ENCODE measurements at regions of chr15 and their contacts with region 1.

Region 1: GRCh38 chr15:73972984-73973682 is 19.0 kb downstream of the STOML1 start:
- DNase-seq: peak; percentile 60 to 81 (median 77)
- ATAC-seq: peak; percentile 92
- H3K4me3 ChIP-seq: peak overlapping the region; percentile 7
- H3K4me3 Mint-ChIP-seq: peak overlapping the region in 8 of 10 donors; percentile 0 to 65 (median 33)
- H3K27ac ChIP-seq: no peak overlapping the region
- H3K27ac Mint-ChIP-seq: peak overlapping the region in 2 of 9 donors; percentile 26 to 42
- H3K4me1 ChIP-seq: peaks cover 0 to 20% of the 10 kb centered on the region in 2 donors
- H3K4me1 Mint-ChIP-seq: peaks cover 11 to 44% (median 34%) of the 10 kb centered on the region in 7 donors
- H3K27me3 ChIP-seq: no peaks in the 10 kb centered on the region
- H3K27me3 Mint-ChIP-seq: peaks cover 4 to 22% (median 5%) of the 10 kb centered on the region in 5 donors

Region 2: DNA sequence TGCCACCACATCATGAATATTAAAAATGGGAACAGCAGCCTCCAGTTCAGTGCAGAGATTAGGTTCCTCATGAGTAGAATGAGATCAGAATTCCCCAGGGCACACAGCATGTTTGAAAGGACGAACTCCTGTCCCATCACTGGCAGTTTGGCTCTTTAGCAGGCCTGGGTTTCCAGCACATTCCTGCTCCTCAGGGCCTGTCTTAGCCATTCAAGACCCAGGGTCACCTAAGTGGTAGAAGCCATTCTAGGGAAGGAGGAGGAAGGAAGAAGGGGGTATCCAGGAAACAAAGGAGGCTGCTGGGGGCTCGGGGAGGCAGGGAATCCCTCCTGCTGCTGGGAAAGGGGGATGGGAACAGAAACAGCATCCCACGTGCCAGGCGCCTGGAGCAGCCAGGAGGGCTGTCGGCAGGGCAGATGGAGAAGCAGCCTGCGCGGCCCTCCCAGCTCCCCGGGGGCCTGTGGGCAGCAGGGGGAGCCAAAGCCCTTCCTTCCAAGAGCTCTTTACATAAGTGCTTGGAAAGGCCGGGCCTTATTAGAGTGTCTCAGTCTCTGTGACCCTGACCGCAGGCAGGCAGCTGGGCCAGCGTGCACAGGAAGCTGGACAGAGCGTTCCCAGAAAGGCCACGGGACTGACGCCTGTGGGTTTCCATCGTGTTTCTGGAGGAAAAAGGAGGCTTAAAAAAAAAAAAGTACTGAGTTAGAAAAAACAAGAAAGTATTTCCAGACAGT is 22.1 kb before region 1 on chr15:
- CTCF ChIA-PET with region 1: interaction called, 29 read pairs
- POLR2A ChIA-PET with region 1: no interaction called
- intact Hi-C with region 1: no loop called
- DNase-seq: peak; percentile 53 to 76 (median 71)
- ATAC-seq: peak; percentile 89
- H3K4me3 ChIP-seq: no peak overlapping the region
- H3K4me3 Mint-ChIP-seq: peak overlapping the region in 1 of 10 donors; percentile 23
- H3K27ac ChIP-seq: no peak overlapping the region
- H3K27ac Mint-ChIP-seq: peak overlapping the region; percentile 10 to 97 (median 83)
- H3K4me1 ChIP-seq: peaks cover 0 to 6% of the 10 kb centered on the region in 2 donors
- H3K4me1 Mint-ChIP-seq: peaks cover 4 to 9% (median 7%) of the 10 kb centered on the region in 7 donors
- H3K27me3 ChIP-seq: no peaks in the 10 kb centered on the region
- H3K27me3 Mint-ChIP-seq: peaks cover 0 to 3% (median 0%) of the 10 kb centered on the region in 5 donors

Region 3: DNA sequence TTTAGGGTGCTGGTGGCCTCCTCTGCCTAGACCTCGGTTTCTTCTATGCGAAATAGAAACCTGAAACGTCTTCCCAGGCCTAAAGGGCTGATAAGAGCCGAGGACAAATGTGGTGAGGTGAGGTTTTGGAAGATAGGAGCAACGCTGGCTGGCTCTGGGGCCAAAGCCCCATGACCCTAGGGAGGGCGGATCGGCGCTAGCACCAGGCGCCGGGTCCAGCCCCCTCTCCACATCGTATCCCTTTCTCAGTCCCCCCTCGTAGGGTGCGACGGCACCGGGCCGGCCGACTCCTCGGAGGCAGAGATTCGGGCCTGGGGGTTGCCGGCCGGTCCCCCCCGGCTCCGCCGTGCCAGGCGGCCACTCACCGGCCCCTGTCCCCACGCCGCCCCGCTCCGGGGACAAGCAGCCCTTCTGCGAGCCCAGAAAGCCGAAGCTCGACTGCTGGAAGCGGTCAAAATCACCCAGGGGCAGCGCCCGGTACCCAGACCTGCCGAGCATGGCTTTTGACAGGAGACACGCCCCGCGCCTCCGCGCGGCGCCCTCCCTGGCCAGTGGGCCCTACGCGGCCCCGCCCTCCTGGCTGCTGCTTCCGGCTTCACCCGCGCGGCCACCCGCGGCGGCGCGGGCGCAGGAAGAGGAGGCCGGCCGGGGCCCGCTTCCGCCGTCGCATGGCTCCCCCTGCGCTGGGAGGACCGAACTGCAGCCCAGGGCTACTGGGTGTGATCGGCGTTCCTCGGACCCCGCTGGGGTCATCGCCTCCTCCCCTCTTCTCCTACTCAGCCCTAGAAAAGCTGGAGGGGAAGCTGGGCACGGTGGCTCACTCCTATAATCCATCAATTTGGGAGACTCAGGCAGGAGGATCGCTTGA is 18.8 kb after region 1 on chr15 and contains the start of gene STOML1:
- CTCF ChIA-PET with region 1: interaction called, 15 read pairs
- POLR2A ChIA-PET with region 1: interaction called, 9 read pairs
- intact Hi-C with region 1: loop called (anchors 1 to 2 kb)
- DNase-seq: peak; percentile 85 to 99 (median 91)
- ATAC-seq: peak; percentile 91
- H3K4me3 ChIP-seq: peak within 1 kb of the TSS; percentile 68
- H3K4me3 Mint-ChIP-seq: peak within 1 kb of the TSS; percentile 82 to 100 (median 98)
- H3K27ac ChIP-seq: peak within 1 kb of the TSS; percentile 90
- H3K27ac Mint-ChIP-seq: peak within 1 kb of the TSS; percentile 72 to 99 (median 87)
- H3K4me1 ChIP-seq: peaks cover 33 to 35% of the 10 kb centered on the region in 2 donors
- H3K4me1 Mint-ChIP-seq: peaks cover 28 to 62% (median 49%) of the 10 kb centered on the region in 7 donors
- H3K27me3 ChIP-seq: no peaks in the 10 kb centered on the region
- H3K27me3 Mint-ChIP-seq: no peaks in the 10 kb centered on the region
- total RNA-seq, gene STOML1: 7.5 to 14.5 (median 12.3) TPM

Region 4: DNA sequence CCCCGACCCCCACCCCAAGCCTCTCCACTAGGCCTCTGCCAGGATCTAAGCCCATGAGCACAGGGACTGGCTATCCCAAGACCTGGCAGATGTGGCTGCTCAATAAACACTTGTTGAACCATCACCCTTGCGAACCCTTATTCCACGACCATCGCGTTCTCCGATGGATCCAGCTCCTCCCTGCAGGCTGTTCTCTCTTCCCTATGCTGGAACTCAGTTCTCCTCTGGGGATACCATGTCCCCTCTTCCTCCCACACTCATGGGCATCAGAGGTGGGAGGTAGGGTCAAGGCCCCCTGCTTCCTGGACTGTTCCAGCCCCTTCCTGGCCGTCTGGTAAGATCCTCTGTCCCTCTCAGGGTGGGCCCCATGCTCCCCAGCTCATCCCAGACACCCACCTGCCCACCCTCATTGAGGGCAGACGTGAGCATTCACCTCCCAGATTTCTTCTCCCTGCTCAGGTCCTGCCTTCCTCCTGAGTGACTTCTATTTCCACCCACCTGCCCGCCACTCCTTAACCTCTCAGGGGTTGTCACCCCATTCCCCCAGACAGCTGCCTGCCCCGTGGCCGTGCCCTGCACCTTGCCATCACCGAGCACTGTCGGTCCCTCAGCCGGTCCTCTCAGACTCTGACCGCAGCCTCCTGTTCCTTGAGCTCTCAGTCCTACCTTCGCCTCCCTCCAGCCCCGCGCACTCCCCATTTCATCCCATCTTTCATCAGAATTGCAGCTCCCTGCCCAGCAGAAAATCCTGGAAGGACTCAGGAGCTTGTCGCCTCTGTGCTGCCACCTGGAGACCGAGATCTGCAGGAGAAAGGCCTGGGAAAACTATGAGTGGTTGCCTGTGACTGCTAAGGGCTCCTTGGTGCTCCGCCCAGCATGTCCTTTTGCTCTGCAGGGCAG is 63.4 kb after region 1 on chr15:
- CTCF ChIA-PET with region 1: interaction called, 37 read pairs
- POLR2A ChIA-PET with region 1: no interaction called
- intact Hi-C with region 1: loop called in 1 of 2 experiments (anchors 1 kb)
- DNase-seq: no peak
- ATAC-seq: no peak
- H3K4me3 ChIP-seq: no peak overlapping the region
- H3K4me3 Mint-ChIP-seq: no peak overlapping the region
- H3K27ac ChIP-seq: no peak overlapping the region
- H3K27ac Mint-ChIP-seq: peak overlapping the region in 4 of 9 donors; percentile 14 to 82 (median 56)
- H3K4me1 ChIP-seq: no peaks in the 10 kb centered on the region
- H3K4me1 Mint-ChIP-seq: peaks cover 0 to 4% (median 0%) of the 10 kb centered on the region in 7 donors
- H3K27me3 ChIP-seq: no peaks in the 10 kb centered on the region
- H3K27me3 Mint-ChIP-seq: no peaks in the 10 kb centered on the region

Region 5: DNA sequence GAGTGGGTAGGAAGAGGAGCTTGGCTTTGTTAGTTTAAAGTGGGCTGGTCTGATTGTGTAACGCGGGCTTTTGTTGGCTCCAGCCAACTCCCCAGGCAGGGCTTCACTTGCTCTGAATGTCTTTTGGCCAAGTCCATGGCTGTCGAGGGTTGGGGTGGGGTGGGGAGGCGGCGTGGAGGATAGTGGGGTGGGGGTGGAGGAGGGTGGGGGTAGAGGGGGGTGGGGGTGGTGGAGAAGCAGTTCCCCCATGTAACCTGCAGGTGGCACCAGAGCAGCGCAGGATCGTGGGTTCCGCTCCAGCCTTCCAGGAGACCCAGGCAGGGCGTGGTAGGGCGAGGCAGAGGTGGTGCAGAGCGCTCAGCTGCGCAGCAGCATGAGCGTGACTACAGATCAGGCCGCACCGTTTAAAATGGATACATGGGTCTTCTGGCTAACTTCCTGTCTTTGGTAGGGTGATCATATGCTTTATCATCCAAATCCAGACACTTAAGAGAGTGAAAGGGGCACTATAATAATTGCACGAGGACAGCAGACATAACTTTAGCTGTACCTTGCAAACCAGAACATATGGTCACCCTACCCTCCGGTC is 80.9 kb after region 1 on chr15:
- CTCF ChIA-PET with region 1: interaction called, 39 read pairs
- POLR2A ChIA-PET with region 1: no interaction called
- intact Hi-C with region 1: no loop called
- DNase-seq: peak; percentile 38 to 73 (median 71)
- ATAC-seq: peak; percentile 99
- H3K4me3 ChIP-seq: no peak overlapping the region
- H3K4me3 Mint-ChIP-seq: peak overlapping the region in 9 of 10 donors; percentile 4 to 61 (median 46)
- H3K27ac ChIP-seq: no peak overlapping the region
- H3K27ac Mint-ChIP-seq: peak overlapping the region in 1 of 9 donors; percentile 37
- H3K4me1 ChIP-seq: peaks cover 0 to 1% of the 10 kb centered on the region in 2 donors
- H3K4me1 Mint-ChIP-seq: peaks cover 7 to 18% (median 12%) of the 10 kb centered on the region in 7 donors
- H3K27me3 ChIP-seq: no peaks in the 10 kb centered on the region
- H3K27me3 Mint-ChIP-seq: no peaks in the 10 kb centered on the region

Region 6: GRCh38 chr15:74134387-74135027 is 161.4 kb after region 1 on chr15:
- CTCF ChIA-PET with region 1: no interaction called
- POLR2A ChIA-PET with region 1: no interaction called
- intact Hi-C with region 1: loop called (anchors 1 to 5 kb)
- DNase-seq: peak in 1 of 9 donors; percentile 32
- ATAC-seq: no peak
- H3K4me3 ChIP-seq: no peak overlapping the region
- H3K4me3 Mint-ChIP-seq: peak overlapping the region in 6 of 10 donors; percentile 66 to 80 (median 67)
- H3K27ac ChIP-seq: no peak overlapping the region
- H3K27ac Mint-ChIP-seq: peak overlapping the region in 1 of 9 donors; percentile 33
- H3K4me1 ChIP-seq: peaks cover 4 to 20% of the 10 kb centered on the region in 2 donors
- H3K4me1 Mint-ChIP-seq: peaks cover 24 to 47% (median 33%) of the 10 kb centered on the region in 7 donors
- H3K27me3 ChIP-seq: peaks cover 0 to 27% of the 10 kb centered on the region in 2 donors
- H3K27me3 Mint-ChIP-seq: peaks cover 66 to 89% (median 77%) of the 10 kb centered on the region in 5 donors

Region 7: DNA sequence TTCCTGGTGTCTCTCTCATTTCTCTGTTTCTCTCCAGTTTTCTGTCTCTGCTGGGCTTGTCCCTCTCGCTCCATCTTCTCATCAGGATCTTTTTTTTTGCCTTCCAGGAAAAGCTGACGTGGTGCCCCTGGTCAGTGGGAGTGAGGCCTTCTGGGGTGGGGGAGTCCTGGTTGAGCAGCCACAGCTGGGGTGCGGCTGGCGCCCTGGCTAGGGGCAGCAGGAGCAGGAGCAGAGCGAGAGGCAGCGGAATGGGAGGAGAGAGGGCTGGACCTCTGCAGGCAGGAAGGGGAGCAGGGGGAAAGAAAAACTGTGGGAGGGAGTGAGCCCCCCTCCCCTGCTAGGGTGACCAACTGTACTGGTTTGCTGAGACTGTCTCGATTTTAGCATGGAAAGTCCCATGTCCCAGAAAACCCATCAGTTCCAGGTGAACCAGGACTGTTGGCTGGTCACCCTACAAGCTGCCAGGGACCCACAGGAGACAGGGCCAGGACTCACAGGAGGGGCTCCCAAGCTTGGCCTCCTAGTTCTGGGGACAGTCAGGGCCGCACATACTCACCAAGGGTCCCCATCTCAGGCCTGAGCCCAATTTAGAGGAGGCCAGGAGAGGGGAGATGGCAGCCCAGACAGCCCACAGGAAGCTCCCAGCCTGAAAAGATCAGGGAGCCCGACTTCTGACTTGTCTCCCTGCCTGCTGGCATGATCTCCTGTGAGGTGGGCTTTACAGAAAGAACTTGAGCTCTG is 197.5 kb after region 1 on chr15:
- CTCF ChIA-PET with region 1: no interaction called
- POLR2A ChIA-PET with region 1: no interaction called
- intact Hi-C with region 1: no loop called
- DNase-seq: no peak
- ATAC-seq: no peak
- H3K4me3 ChIP-seq: no peak overlapping the region
- H3K4me3 Mint-ChIP-seq: no peak overlapping the region
- H3K27ac ChIP-seq: no peak overlapping the region
- H3K27ac Mint-ChIP-seq: no peak overlapping the region
- H3K4me1 ChIP-seq: no peaks in the 10 kb centered on the region
- H3K4me1 Mint-ChIP-seq: peaks cover 0 to 6% (median 0%) of the 10 kb centered on the region in 7 donors
- H3K27me3 ChIP-seq: no peaks in the 10 kb centered on the region
- H3K27me3 Mint-ChIP-seq: peaks cover 0 to 11% (median 0%) of the 10 kb centered on the region in 5 donors

Region 8: GRCh38 chr15:74322181-74323076 is 349.3 kb after region 1 on chr15:
- CTCF ChIA-PET with region 1: interaction called, 14 read pairs
- POLR2A ChIA-PET with region 1: interaction called, 3 read pairs
- intact Hi-C with region 1: loop called in 1 of 2 experiments (anchors 1 kb)
- DNase-seq: peak; percentile 19 to 53 (median 45)
- ATAC-seq: peak; percentile 78
- H3K4me3 ChIP-seq: no peak overlapping the region
- H3K4me3 Mint-ChIP-seq: no peak overlapping the region
- H3K27ac ChIP-seq: no peak overlapping the region
- H3K27ac Mint-ChIP-seq: no peak overlapping the region
- H3K4me1 ChIP-seq: peaks cover 0 to 4% of the 10 kb centered on the region in 2 donors
- H3K4me1 Mint-ChIP-seq: peaks cover 0 to 9% (median 6%) of the 10 kb centered on the region in 7 donors
- H3K27me3 ChIP-seq: no peaks in the 10 kb centered on the region
- H3K27me3 Mint-ChIP-seq: peaks cover 0 to 7% (median 0%) of the 10 kb centered on the region in 5 donors

Measured in naive thymus-derived CD4-positive, alpha-beta T cell (primary cell).